ENCODE measurements at regions of chr4 and their contacts with region 1.

Region 1: DNA sequence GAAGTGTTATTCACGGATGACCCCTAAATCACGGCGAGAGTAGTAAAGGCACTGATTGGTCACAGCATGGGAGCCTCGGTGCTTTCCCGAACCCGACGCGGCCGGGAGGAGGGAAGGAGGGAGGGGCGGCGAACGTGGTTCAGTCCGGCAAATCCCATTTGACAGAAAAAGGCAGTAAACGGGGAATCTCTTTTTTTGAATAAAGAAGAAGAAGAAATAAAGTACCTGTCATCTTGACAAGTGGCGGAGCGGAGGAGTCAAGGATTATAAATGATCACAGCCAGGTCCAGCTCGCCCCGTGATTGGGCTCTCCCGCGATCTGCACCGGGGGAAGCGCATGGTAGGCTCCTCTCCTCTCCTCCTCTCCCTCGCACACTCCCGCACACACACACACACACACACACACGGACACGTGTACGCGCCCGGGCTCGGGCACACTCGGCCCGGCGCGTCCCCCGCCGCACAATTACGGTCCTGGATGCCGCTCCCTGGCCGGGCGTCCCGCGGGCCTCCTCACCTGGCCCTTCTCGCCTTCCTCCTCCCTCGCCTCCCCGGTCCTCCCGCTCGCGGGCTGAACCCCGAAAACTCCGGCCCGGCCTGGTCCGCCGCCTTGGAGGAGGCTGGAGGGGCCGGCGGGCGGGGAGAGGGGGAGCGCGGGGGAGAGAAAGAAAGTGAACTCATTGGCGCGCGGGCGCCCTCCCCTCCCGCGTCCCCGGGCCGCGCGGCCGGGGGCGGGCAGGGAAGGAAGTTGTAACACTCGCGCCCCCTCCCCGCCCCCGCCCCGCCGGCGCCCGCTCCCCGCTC is 99.2 kb upstream of the TENM3 start:
- DNase-seq: no peak
- ATAC-seq: no peak
- H3K4me3 ChIP-seq: no peak overlapping the region
- H3K4me3 Mint-ChIP-seq: peak overlapping the region; percentile 56 to 84 (median 66)
- H3K27ac ChIP-seq: no peak overlapping the region
- H3K27ac Mint-ChIP-seq: peak overlapping the region in 1 of 9 donors; percentile 42
- H3K4me1 ChIP-seq: no peaks in the 10 kb centered on the region
- H3K4me1 Mint-ChIP-seq: peaks cover 0 to 29% (median 17%) of the 10 kb centered on the region in 7 donors
- H3K27me3 ChIP-seq: peaks cover 0 to 7% of the 10 kb centered on the region in 2 donors
- H3K27me3 Mint-ChIP-seq: peaks cover 61 to 74% (median 71%) of the 10 kb centered on the region in 5 donors

Region 2: DNA sequence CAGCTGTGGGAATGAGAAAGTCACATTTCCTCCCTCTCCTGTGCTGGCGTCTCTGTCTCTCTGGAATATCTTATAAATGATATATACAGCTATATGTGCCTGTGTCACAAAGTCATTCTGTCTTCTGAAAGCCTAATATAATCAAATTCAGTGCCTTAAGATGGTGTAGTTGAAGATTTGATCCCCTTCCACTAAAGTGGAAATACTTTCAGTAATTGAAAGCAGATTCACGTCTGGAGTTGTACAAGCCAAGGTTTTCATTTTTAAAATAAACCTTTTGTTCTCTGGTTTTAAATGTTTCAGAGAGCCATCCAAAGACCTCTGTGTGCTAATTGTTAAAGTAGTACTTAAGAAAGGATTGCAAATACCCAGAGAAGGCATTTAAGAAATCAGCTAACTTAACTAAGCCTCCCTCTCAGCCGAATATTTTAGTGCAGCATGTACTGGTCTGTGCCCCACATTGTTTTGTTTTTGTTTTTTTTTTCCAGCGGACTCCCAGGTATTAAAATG is 306.0 kb after region 1 on chr4:
- CTCF ChIA-PET with region 1: no interaction called
- POLR2A ChIA-PET with region 1: no interaction called
- intact Hi-C with region 1: loop called in 1 of 2 experiments (anchors 10 kb)
- DNase-seq: no peak
- ATAC-seq: no peak
- H3K4me3 ChIP-seq: no peak overlapping the region
- H3K4me3 Mint-ChIP-seq: peak overlapping the region; percentile 62 to 82 (median 76)
- H3K27ac ChIP-seq: no peak overlapping the region
- H3K27ac Mint-ChIP-seq: no peak overlapping the region
- H3K4me1 ChIP-seq: peaks cover 5 to 11% of the 10 kb centered on the region in 2 donors
- H3K4me1 Mint-ChIP-seq: peaks cover 10 to 25% (median 23%) of the 10 kb centered on the region in 7 donors
- H3K27me3 ChIP-seq: peaks cover 0 to 23% of the 10 kb centered on the region in 2 donors
- H3K27me3 Mint-ChIP-seq: peaks cover 64 to 74% (median 73%) of the 10 kb centered on the region in 5 donors